Mammary epithelial cell (primary cell): ENCODE measurements at regions of chr1 and their contacts with region 1.

Region 1: DNA sequence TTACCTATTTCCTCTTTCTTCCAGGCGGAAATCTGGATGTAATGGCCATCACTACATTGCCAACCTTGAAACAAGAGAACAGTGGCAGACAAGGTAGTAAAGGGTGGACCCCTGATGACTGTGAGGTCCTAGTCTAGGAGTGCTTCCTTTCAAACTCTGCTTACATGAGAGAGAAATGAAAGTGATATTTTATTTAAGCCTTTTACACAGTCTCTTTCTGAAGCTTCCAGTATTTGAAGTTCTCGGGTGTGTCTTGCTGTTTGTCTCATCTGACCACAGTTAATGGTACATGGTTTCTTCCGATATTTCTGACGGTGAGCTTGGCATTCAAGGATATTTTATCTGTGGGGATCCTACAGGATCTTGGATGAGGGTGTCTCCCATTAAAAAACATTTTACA is 215.2 kb downstream of the SLC45A1 start:
- DNase-seq: no peak
- H3K4me3 ChIP-seq: no peak overlapping the region
- H3K27ac ChIP-seq: no peak overlapping the region
- H3K4me1 ChIP-seq: no peaks in the 10 kb centered on the region
- H3K27me3 ChIP-seq: no peaks in the 10 kb centered on the region
- CTCF ChIP-seq: no peak

Region 2: GRCh38 chr1:8463144-8463927 is 69.8 kb before region 1 on chr1:
- CTCF ChIA-PET with region 1: no interaction called
- dilution Hi-C with region 1: loop called (anchors 5 kb)
- in situ Hi-C with region 1: no loop called
- intact Hi-C with region 1: no loop called
- DNase-seq: no peak
- H3K4me3 ChIP-seq: no peak overlapping the region
- H3K27ac ChIP-seq: no peak overlapping the region
- H3K4me1 ChIP-seq: peaks cover 5% of the 10 kb centered on the region
- H3K27me3 ChIP-seq: no peaks in the 10 kb centered on the region
- CTCF ChIP-seq: no peak